ENCODE measurements at regions of chr2 and their contacts with region 1.

Region 1: DNA sequence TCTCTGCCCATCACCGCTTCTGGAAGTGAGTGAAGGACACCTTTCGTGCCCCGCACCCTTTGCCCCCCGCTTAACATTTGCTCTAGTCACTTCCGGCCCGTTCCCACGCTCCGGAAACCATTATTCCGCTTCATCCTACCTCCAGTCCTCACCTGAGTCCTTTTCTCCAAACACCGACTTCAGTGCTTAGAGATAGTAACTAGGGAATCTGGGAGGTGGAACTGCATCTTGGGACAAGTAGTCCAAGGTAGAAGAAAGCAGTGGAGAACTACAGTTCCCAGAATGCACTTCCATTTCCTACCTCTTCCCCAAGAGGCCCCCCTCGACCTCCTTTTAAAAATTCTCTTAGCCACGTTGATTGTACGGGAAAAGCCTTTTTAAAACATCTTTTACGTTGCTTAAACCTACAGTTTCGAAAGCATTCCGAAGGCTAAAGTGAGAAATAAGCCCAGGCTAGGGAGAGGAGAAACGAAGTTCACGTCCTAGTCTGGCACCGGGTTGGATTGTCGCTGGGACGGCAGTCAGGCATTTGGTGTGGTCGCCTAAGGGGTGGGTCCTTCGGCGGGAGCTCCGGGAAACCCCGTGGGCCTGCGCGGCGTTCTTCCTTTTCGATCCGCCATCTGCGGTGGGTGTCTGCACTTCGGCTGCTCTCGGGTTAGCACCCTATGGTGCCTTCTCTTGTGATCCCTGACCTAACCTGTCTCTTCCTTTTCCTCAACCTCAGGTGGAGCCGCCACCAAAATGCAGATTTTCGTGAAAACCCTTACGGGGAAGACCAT is at the starts of genes CLHC1 and RPS27A:
- DNase-seq: peak; percentile 90 to 95 (median 93)
- H3K4me3 ChIP-seq: peak within 1 kb of the TSS; percentile 99
- H3K4me3 Mint-ChIP-seq: peak within 1 kb of the TSS; percentile 99 to 100 (median 100)
- H3K27ac ChIP-seq: peak within 1 kb of the TSS; percentile 91
- H3K27ac Mint-ChIP-seq: peak within 1 kb of the TSS; percentile 97 to 99 (median 98)
- H3K4me1 ChIP-seq: peaks cover 49% of the 10 kb centered on the region
- H3K4me1 Mint-ChIP-seq: peaks cover 56 to 76% (median 71%) of the 10 kb centered on the region in 3 donors
- H3K27me3 ChIP-seq: no peaks in the 10 kb centered on the region
- H3K27me3 Mint-ChIP-seq: peaks cover 0 to 2% of the 10 kb centered on the region in 2 donors
- total RNA-seq, gene CLHC1: 8.4 to 9.8 TPM
- total RNA-seq, gene RPS27A: 1,155 to 1,172 TPM

Region 2: DNA sequence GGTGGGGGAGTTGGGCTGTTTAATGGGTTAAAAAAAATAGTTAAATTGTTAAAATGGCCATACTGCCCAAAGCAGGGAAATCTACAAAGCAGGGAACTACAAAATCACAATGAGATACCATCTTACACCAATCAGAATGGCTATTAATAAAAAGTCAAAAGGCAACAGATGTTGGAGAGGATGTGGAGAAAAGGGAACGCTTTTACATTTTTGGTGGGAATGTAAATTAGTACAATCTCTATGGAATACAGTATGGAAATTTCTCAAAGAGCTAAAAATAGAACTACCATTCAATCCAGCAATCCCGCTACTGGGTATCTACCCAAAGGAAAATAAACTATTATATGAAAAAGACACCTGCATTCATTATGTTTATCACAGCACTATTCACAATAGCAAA is 27.3 kb before region 1 on chr2:
- CTCF ChIA-PET with region 1: no interaction called
- POLR2A ChIA-PET with region 1: no interaction called
- DNase-seq: no peak
- H3K4me3 ChIP-seq: no peak overlapping the region
- H3K4me3 Mint-ChIP-seq: no peak overlapping the region
- H3K27ac ChIP-seq: no peak overlapping the region
- H3K27ac Mint-ChIP-seq: no peak overlapping the region
- H3K4me1 ChIP-seq: no peaks in the 10 kb centered on the region
- H3K4me1 Mint-ChIP-seq: no peaks in the 10 kb centered on the region
- H3K27me3 ChIP-seq: no peaks in the 10 kb centered on the region
- H3K27me3 Mint-ChIP-seq: no peaks in the 10 kb centered on the region

Region 3: DNA sequence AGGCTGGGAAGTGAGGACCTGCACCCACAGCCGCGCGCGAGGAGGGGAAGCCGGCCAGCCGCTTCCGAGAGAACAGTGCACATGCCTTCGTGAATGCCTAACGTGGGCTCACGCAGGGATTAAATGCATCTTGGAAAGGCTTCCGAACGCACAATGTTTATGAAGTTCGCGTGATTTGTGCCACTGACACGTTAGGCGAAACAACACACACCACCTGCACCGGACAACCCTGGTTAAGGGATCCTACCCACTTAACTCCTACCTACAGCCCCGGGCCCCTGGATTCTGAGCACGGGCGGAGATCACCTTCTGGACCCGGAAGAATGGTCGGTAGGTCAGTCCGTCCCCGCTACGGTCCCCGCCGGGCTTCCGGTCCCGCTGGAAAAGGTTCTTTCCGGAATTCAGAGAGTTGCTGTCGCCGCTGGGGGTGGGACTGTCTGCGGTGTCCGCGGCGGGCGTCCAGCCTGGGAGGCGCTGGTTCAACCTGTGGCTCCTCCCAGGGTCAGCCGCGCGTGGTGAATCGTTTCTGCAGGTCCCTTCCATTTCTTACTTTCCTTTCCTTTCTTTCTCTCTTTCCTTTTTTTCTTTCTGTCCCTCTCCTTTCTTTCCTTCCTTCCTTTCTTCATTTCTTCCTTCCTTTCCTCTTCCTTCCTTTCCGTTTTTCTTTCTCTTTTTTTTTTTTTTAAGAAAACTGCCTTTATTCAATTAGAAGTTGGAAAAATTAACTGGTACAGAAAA is 36.8 kb after region 1 on chr2 and contains the start of gene MTIF2:
- CTCF ChIA-PET with region 1: interaction called, 3 read pairs
- POLR2A ChIA-PET with region 1: interaction called, 10 read pairs
- DNase-seq: peak; percentile 81 to 89 (median 83)
- H3K4me3 ChIP-seq: peak within 1 kb of the TSS; percentile 84
- H3K4me3 Mint-ChIP-seq: peak within 1 kb of the TSS; percentile 93 to 99 (median 95)
- H3K27ac ChIP-seq: peak within 1 kb of the TSS; percentile 86
- H3K27ac Mint-ChIP-seq: peak within 1 kb of the TSS; percentile 95 to 99 (median 97)
- H3K4me1 ChIP-seq: peaks cover 17% of the 10 kb centered on the region
- H3K4me1 Mint-ChIP-seq: peaks cover 17 to 31% (median 28%) of the 10 kb centered on the region in 3 donors
- H3K27me3 ChIP-seq: no peaks in the 10 kb centered on the region
- H3K27me3 Mint-ChIP-seq: peaks cover 4 to 5% of the 10 kb centered on the region in 2 donors
- total RNA-seq, gene MTIF2: 58.3 to 58.9 TPM

Region 4: DNA sequence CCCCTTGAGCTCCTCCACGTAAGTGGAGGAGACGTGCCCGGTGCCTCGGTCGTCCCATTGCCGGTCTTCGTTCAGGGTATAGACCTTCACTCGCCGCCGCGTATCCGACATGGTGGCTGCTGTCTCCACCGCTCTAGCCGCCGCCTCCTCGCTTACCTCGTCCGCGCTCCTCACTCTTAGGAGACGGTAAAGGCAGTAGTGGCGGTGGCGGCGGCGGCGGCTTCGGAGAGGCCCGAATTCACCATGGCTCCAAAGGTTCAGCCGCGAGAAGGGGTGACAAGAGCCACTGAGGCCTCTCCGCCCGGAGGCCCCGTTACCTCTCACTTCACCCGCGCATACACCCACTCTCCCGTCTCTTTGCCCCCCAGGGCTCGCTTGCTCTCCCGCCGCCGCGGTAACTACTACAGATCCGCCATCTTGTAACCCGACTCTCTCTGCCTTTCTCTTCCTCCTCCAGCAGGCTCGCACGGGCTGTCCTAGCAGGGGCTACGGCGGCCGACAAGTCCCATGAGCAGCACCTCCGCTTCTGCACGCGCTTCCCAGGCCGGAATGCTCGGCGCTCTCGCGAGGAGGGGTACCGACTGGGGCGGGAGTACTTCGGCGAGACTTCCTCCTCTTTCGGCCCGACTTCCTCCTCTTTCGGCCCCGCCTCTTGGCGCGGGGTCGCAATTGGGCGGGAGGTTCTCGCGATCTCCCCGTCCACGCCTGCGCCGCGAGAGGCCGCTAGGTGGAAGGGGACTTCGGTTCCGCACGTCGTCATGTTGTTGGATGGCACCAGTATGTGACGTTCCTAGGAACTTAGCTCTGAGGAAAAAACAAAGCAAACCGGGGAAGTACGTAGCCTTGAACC is 385.1 kb after region 1 on chr2 and contains the start of gene PPP4R3B:
- CTCF ChIA-PET with region 1: no interaction called
- POLR2A ChIA-PET with region 1: interaction called, 11 read pairs
- DNase-seq: peak; percentile 97 to 100 (median 100)
- H3K4me3 ChIP-seq: peak within 1 kb of the TSS; percentile 97
- H3K4me3 Mint-ChIP-seq: no peak within 1 kb of the TSS
- H3K27ac ChIP-seq: peak within 1 kb of the TSS; percentile 99
- H3K27ac Mint-ChIP-seq: no peak within 1 kb of the TSS
- H3K4me1 ChIP-seq: peaks cover 64% of the 10 kb centered on the region
- H3K4me1 Mint-ChIP-seq: peaks cover 32 to 42% (median 36%) of the 10 kb centered on the region in 3 donors
- H3K27me3 ChIP-seq: no peaks in the 10 kb centered on the region
- H3K27me3 Mint-ChIP-seq: no peaks in the 10 kb centered on the region
- total RNA-seq, gene PPP4R3B: 83.0 to 94.0 TPM

Measured in CD8-positive, alpha-beta memory T cell (primary cell).